ENCODE measurements at regions of chr5 and their contacts with region 1.

Region 1: GRCh38 chr5:132426525-132427138 is 57.1 kb downstream of the SLC22A5 start:
- DNase-seq: peak; percentile 84
- ATAC-seq: peak; percentile 46
- H3K4me3 Mint-ChIP-seq: peak overlapping the region; percentile 56
- H3K27ac Mint-ChIP-seq: peak overlapping the region; percentile 94
- H3K4me1 Mint-ChIP-seq: peaks cover 96% of the 10 kb centered on the region
- H3K27me3 Mint-ChIP-seq: no peaks in the 10 kb centered on the region

Region 2: DNA sequence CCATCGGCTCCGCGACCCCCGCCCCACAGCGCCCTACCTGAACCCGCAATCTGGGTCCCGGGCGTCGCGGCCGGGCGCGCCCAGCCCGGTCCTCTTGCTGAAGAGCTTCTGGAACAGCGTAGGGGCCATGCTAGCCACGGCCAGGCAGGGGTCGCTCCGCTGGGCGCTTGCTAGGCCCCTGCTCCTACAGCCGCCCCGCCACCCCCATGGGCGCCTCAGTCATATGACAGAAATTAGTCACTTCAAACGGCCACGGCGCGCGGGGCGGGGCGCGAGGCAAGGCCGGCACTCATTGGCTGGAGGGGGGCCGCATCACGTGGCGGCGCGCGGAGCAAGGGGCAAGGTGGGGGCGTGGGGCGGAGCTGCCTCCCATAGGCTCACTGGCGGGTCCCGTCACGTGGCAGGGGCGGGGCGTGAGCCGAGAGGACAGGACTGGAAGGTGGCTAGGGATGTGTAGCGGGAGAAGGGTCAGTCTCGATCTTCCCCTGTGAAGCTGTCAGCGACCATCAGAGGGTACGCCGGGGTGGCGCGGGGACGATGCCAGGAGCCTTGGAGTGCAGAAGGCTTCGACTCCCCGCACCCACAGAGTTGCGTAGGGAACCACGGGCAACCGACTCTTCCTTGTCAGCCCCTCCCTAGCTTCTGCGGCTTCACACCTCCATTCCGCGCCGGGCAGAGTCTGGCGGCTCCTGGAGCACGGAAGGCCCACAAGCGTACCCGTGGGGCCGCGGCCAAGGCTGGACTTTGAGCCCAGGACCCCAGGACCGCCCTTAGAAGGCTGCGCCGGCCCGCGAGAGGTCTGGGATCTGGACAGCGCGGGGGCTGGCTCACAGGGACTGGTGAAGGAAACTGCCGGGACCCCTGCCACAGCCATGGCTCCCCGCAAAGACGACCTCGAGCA is 629.6 kb before region 1 on chr5 and contains the start of gene FNIP1:
- CTCF ChIA-PET with region 1: no interaction called
- POLR2A ChIA-PET with region 1: no interaction called
- intact Hi-C with region 1: loop called in 1 of 2 experiments (anchors 5 kb)
- DNase-seq: peak; percentile 99
- ATAC-seq: peak; percentile 98
- H3K4me3 Mint-ChIP-seq: peak within 1 kb of the TSS; percentile 99
- H3K27ac Mint-ChIP-seq: peak within 1 kb of the TSS; percentile 91
- H3K4me1 Mint-ChIP-seq: peaks cover 28% of the 10 kb centered on the region
- H3K27me3 Mint-ChIP-seq: no peaks in the 10 kb centered on the region
- total RNA-seq, gene FNIP1: 14.2 to 16.3 TPM

Region 3: DNA sequence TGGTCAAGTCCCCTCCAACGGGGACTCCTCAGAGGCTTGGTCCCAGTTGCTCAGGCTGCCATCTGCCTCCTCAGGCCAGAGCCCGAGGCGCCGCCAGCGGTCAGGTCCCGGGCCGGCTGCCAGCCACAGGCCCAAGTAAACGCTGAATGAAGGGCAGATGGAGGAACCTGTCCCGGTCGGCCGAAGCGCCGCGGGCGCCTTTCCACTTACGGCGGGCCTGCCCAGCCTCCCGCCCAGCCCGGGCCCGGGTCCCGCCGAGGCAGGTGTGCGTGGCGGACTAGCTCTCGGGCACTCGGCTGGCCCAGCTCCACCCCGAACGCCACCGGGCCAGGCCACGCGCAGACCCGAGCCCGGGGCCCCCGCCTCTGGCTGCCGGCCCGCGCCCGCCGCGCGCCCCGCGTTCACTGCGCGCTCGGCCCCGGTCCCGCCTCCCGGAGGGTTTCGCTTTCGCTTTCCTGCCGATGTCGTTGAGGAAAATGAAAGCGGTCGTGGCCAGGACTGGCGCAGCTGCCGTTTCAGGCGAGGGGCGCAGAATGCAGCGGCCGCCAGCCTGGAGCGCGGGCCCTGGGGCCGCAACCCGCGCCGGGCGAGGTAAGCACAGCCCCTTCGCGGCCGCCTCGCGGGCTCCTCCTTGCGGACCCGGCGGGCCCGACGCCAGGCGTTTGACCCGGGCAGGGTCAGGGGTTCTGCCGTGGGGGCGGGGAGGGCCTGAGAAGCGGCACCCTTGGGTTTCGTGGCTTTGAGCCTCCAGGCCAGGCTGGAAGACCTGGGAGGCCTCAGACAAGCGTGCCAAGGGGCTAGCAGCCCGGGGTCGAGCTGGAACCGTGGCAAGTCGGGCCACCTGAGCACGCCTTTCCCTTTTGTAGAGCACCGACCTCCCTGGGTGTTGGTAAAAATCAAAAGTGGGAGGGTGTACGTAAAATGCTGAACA is 15.9 kb before region 1 on chr5:
- CTCF ChIA-PET with region 1: interaction called, 18 read pairs
- POLR2A ChIA-PET with region 1: interaction called, 14 read pairs
- intact Hi-C with region 1: loop called (anchors 1 to 2 kb)
- DNase-seq: peak; percentile 92
- ATAC-seq: peak; percentile 68
- H3K4me3 Mint-ChIP-seq: peak overlapping the region; percentile 83
- H3K27ac Mint-ChIP-seq: peak overlapping the region; percentile 98
- H3K4me1 Mint-ChIP-seq: peaks cover 71% of the 10 kb centered on the region
- H3K27me3 Mint-ChIP-seq: no peaks in the 10 kb centered on the region

Region 4: DNA sequence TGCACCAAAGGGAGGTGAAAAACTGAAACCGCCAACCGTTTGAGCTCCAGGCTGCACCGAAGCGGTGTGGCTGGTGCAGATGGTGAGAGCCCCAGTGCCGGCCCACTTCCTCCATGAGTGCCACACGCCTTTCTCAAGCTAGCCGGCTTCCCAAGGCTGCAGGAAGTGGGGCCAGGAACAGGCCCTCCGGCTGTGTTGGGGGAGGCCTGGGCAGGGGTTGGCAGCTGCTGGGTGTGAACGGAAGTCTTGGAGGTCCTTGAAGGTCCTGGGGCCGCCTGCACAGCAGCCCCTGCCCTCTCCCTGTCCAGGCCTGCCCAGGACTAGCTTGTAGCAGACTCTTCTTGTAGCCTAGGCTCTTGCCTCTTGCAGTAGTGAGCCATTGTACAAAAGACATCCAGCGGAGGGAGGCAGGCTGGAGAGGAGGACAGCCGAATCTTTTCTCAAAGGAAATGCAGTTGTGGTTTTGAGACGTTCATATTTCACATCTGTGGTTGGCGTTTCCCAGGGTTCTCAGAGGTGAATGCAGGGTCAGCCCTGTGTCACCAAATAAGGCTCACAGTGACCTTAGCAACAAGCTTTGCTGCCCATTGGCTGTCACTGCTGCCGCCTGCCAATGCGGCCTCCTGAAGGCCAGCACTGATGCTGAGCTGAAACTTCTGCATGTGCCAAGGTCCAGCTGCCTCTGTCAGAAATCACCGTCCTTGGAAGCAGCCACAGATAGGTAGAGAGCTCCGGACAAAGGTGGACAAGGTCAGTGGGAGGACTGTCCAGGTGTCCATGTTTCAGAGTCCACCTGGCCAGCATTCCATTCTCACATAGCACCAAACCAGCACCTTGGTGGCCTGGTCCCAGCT is 40.0 kb after region 1 on chr5:
- CTCF ChIA-PET with region 1: interaction called, 89 read pairs
- POLR2A ChIA-PET with region 1: interaction called, 42 read pairs
- intact Hi-C with region 1: loop called in 1 of 2 experiments (anchors 2 kb)
- DNase-seq: peak; percentile 78
- ATAC-seq: peak; percentile 61
- H3K4me3 Mint-ChIP-seq: peak overlapping the region; percentile 51
- H3K27ac Mint-ChIP-seq: peak overlapping the region; percentile 51
- H3K4me1 Mint-ChIP-seq: peaks cover 88% of the 10 kb centered on the region
- H3K27me3 Mint-ChIP-seq: no peaks in the 10 kb centered on the region

Region 5: GRCh38 chr5:132479111-132479951 is 52.7 kb after region 1 on chr5:
- CTCF ChIA-PET with region 1: interaction called, 24 read pairs
- POLR2A ChIA-PET with region 1: interaction called, 130 read pairs
- intact Hi-C with region 1: no loop called
- DNase-seq: no peak
- ATAC-seq: peak; percentile 31
- H3K4me3 Mint-ChIP-seq: no peak overlapping the region
- H3K27ac Mint-ChIP-seq: peak overlapping the region; percentile 65
- H3K4me1 Mint-ChIP-seq: peaks cover 53% of the 10 kb centered on the region
- H3K27me3 Mint-ChIP-seq: no peaks in the 10 kb centered on the region

Region 6: GRCh38 chr5:132495667-132496190 is 69.1 kb after region 1 on chr5:
- CTCF ChIA-PET with region 1: interaction called, 35 read pairs
- POLR2A ChIA-PET with region 1: interaction called, 130 read pairs
- intact Hi-C with region 1: loop called (anchors 1 kb)
- DNase-seq: peak; percentile 92
- ATAC-seq: peak; percentile 49
- H3K4me3 Mint-ChIP-seq: peak overlapping the region; percentile 87
- H3K27ac Mint-ChIP-seq: peak overlapping the region; percentile 95
- H3K4me1 Mint-ChIP-seq: peaks cover 61% of the 10 kb centered on the region
- H3K27me3 Mint-ChIP-seq: no peaks in the 10 kb centered on the region

Region 7: DNA sequence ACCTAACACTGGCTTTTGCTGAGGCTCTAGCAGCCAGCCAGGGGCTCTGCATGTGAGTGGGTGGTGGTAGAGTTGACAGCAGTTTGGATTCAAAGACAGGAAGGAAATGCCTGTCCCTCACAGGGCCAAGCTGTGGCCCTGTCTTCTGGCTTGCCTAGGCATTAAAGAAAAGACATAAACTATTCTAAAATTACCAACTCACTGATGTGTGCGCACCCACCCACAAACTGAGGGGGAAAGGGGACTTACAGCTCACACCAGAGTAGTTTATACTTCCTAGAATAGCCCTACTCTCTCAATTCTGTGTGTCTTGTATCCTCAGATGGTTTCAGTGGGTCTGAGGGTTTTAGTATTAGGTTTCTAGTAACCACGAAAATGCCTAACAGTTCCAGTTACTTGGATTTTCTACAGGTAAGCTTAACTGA is 213.1 kb after region 1 on chr5:
- CTCF ChIA-PET with region 1: no interaction called
- POLR2A ChIA-PET with region 1: no interaction called
- intact Hi-C with region 1: loop called in 1 of 2 experiments (anchors 5 kb)
- DNase-seq: peak; percentile 44
- ATAC-seq: peak; percentile 3
- H3K4me3 Mint-ChIP-seq: no peak overlapping the region
- H3K27ac Mint-ChIP-seq: no peak overlapping the region
- H3K4me1 Mint-ChIP-seq: peaks cover 71% of the 10 kb centered on the region
- H3K27me3 Mint-ChIP-seq: no peaks in the 10 kb centered on the region

Region 8: DNA sequence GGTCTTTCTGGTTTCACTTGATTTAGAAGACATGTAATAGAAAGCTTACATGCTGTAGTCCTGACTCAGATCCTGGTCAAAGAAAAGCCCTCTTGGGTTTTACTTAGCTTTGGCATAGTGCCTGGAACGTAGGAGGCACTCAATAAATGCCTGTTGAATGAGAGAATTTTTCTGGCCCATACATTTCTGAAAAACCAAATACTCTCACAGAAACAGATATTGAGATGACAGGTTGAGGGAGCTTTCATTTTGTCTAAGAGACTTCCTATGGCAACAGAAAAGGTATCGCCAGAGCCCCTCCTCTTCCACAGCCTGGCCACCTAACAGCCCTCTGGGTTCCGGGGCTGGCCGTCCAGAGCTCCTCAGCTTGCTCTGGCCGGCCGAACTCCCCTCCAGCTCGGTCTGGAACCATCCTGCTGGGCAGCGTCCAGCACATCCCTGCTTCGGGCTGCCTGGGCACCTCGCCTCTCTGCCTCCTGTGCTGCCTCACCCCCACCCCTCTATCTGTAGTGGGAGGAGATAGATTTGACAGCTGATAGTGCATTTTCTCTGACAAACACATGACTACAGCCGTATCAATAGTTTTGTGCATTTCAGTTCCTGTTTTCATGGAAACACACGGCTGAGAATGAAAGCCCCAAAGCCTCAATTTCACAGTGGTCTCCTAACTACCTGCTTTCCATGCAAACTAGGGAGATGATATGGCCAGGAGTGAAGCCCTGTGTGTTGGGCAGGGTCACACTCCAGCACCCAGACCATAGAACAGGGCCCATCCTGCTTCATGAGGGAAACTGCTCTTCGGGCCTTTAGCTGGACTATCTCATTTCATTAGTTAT is 248.3 kb after region 1 on chr5:
- CTCF ChIA-PET with region 1: no interaction called
- POLR2A ChIA-PET with region 1: no interaction called
- intact Hi-C with region 1: no loop called
- DNase-seq: no peak
- ATAC-seq: peak; percentile 75
- H3K4me3 Mint-ChIP-seq: no peak overlapping the region
- H3K27ac Mint-ChIP-seq: peak overlapping the region; percentile 48
- H3K4me1 Mint-ChIP-seq: peaks cover 22% of the 10 kb centered on the region
- H3K27me3 Mint-ChIP-seq: no peaks in the 10 kb centered on the region